Psoas muscle (tissue), 8 donors: ENCODE measurements at regions of chr2 and their contacts with region 1.

Region 1: GRCh38 chr2:172102391-172103278 is at the start of gene DLX2:
- DNase-seq: peak; percentile 70 to 83
- ATAC-seq: peak; percentile 58 to 74 (median 68)
- H3K4me3 ChIP-seq: peak within 1 kb of the TSS; percentile 69
- H3K27ac ChIP-seq: no peak within 1 kb of the TSS
- H3K4me1 ChIP-seq: peaks cover 54% of the 10 kb centered on the region
- H3K27me3 ChIP-seq: peaks cover 0 to 100% (median 73%) of the 10 kb centered on the region in 3 donors
- CTCF ChIP-seq: no peak
- total RNA-seq, gene DLX2: not detected

Region 2: DNA sequence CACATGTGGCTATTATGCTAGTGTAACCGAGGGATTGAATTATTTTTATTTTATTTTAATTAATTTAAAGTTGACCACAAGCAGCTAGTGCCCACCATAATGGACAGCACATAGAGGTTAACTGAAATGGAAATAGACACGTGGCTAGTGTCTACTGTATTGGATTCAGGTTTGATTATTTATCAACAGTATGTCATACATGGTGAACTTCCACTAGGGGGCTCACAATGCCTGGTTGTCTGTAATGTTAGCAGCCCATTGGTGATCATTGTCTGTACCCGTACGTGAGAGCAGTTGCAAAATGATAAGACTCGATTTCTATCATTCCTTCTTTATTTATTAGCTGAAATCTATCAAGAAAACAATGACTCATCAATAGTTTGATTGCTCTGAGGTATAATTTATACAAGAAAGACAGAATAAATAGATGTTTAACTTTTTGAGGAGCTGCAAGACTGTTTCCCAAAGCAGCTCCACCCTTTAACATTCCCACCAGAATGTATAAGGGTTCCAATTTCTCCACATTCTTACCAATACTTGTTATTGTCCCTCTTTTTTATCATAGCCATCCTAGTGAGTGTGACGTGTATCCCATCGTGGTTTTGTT is 503.8 kb before region 1 on chr2:
- intact Hi-C with region 1: loop called in 1 of 2 experiments (anchors 10 kb)
- DNase-seq: no peak
- ATAC-seq: peak; percentile 37 to 84 (median 72)
- H3K4me3 ChIP-seq: no peak overlapping the region
- H3K27ac ChIP-seq: no peak overlapping the region
- H3K4me1 ChIP-seq: no peaks in the 10 kb centered on the region
- H3K27me3 ChIP-seq: no peaks in the 10 kb centered on the region
- CTCF ChIP-seq: peak; percentile 74

Region 3: GRCh38 chr2:171703574-171704347 is 398.9 kb before region 1 on chr2:
- intact Hi-C with region 1: loop called (anchors 5 kb)
- DNase-seq: no peak
- ATAC-seq: peak in 3 of 4 donors; percentile 22 to 66 (median 46)
- H3K4me3 ChIP-seq: no peak overlapping the region
- H3K27ac ChIP-seq: no peak overlapping the region
- H3K4me1 ChIP-seq: peaks cover 19% of the 10 kb centered on the region
- H3K27me3 ChIP-seq: no peaks in the 10 kb centered on the region
- CTCF ChIP-seq: peak; percentile 38

Region 4: GRCh38 chr2:171811245-171811628 is 291.4 kb before region 1 on chr2:
- intact Hi-C with region 1: loop called in 1 of 2 experiments (anchors 5 kb)
- DNase-seq: no peak
- ATAC-seq: peak in 3 of 4 donors; percentile 43 to 70 (median 47)
- H3K4me3 ChIP-seq: no peak overlapping the region
- H3K27ac ChIP-seq: no peak overlapping the region
- H3K4me1 ChIP-seq: peaks cover 11% of the 10 kb centered on the region
- H3K27me3 ChIP-seq: no peaks in the 10 kb centered on the region
- CTCF ChIP-seq: peak; percentile 30

Region 5: DNA sequence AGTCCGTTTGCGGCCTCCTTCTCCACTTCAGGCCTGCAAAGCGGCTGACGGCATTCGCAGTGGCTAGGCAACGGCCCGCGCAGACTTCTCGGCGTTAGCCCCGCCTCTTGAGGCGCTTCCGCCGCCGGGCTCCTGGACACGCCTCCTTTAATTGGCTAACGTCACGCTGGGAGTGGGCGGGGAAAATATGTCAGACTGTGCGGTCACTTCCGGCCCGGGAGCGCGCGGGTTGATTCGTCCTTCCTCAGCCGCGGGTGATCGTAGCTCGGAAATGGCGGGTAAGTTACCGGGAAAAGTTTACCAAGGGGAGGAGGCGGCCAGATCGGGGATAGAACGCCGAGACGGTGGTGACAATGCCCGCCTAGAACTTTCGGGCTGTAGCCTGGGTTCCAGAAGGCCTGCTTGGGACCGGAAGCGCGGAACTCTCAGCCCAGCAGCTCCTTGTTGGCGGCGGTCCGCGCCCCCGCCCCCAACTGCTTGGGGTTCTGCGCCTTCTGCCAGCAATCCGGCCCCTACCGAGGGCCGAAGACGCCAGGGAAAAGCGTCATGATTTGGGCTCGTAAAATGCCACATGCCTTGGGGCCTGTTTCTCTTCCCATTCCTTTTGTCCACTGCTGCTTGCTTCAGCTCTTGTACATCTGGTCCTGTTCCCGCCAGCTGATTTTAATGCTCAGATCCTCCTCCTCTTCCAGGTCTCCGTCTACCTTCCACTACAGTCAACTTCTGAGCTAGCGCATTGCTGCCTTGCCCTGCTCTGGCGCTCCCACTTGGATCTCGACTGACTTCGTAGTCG is 180.2 kb before region 1 on chr2 and contains the start of gene HAT1:
- intact Hi-C with region 1: loop called in 1 of 2 experiments (anchors 10 kb)
- DNase-seq: peak; percentile 97 to 98
- ATAC-seq: peak; percentile 99
- H3K4me3 ChIP-seq: peak within 1 kb of the TSS; percentile 95
- H3K27ac ChIP-seq: peak within 1 kb of the TSS; percentile 97
- H3K4me1 ChIP-seq: peaks cover 26% of the 10 kb centered on the region
- H3K27me3 ChIP-seq: no peaks in the 10 kb centered on the region
- CTCF ChIP-seq: no peak
- total RNA-seq, gene HAT1: 31.8 to 66.5 (median 44.5) TPM

Region 6: GRCh38 chr2:171999604-172000469 is 102.8 kb before region 1 on chr2 and contains the start of gene METAP1D:
- intact Hi-C with region 1: loop called in 1 of 2 experiments (anchors 5 kb)
- DNase-seq: peak; percentile 93 to 95
- ATAC-seq: peak; percentile 99 to 100 (median 100)
- H3K4me3 ChIP-seq: peak within 1 kb of the TSS; percentile 88
- H3K27ac ChIP-seq: peak within 1 kb of the TSS; percentile 91
- H3K4me1 ChIP-seq: peaks cover 12% of the 10 kb centered on the region
- H3K27me3 ChIP-seq: no peaks in the 10 kb centered on the region
- CTCF ChIP-seq: no peak
- total RNA-seq, gene METAP1D: 8.0 to 10.1 (median 10.0) TPM

Region 7: GRCh38 chr2:172031536-172031935 is 71.1 kb before region 1 on chr2:
- intact Hi-C with region 1: no loop called
- DNase-seq: no peak
- ATAC-seq: no peak
- H3K4me3 ChIP-seq: no peak overlapping the region
- H3K27ac ChIP-seq: no peak overlapping the region
- H3K4me1 ChIP-seq: no peaks in the 10 kb centered on the region
- H3K27me3 ChIP-seq: no peaks in the 10 kb centered on the region
- CTCF ChIP-seq: no peak

Region 8: GRCh38 chr2:172084734-172085459 is 17.7 kb before region 1 on chr2:
- intact Hi-C with region 1: no loop called
- DNase-seq: peak; percentile 82 to 88
- ATAC-seq: peak; percentile 89 to 96 (median 92)
- H3K4me3 ChIP-seq: peak overlapping the region; percentile 66
- H3K27ac ChIP-seq: no peak overlapping the region
- H3K4me1 ChIP-seq: peaks cover 39% of the 10 kb centered on the region
- H3K27me3 ChIP-seq: peaks cover 0 to 98% (median 81%) of the 10 kb centered on the region in 3 donors
- CTCF ChIP-seq: no peak